ENCODE measurements at regions of chr3 and their contacts with region 1.

Region 1: DNA sequence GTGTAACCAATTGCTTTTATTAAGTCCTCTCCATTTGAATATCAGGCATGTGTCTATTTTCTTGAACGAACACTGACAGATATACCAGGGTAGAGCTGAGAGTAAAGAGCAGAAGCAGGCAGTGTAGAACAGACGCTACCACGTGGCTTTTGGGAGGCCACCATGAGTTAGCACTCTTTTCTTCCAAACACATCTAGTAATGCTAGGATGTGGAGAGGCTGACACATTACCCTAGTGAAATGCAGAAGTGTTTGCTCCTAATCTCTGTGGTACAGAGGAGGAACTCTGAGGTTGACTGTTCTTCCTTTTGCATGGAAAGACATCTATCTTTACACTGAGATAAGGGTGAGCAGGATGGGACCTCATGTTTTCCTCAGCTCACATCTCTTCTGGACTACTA is 216.3 kb downstream of the SATB1 start:
- DNase-seq: no peak
- ATAC-seq: no peak
- H3K4me3 Mint-ChIP-seq: no peak overlapping the region
- H3K27ac Mint-ChIP-seq: no peak overlapping the region
- H3K4me1 Mint-ChIP-seq: peaks cover 5% of the 10 kb centered on the region
- H3K27me3 Mint-ChIP-seq: no peaks in the 10 kb centered on the region
- CTCF ChIP-seq: no peak

Region 2: DNA sequence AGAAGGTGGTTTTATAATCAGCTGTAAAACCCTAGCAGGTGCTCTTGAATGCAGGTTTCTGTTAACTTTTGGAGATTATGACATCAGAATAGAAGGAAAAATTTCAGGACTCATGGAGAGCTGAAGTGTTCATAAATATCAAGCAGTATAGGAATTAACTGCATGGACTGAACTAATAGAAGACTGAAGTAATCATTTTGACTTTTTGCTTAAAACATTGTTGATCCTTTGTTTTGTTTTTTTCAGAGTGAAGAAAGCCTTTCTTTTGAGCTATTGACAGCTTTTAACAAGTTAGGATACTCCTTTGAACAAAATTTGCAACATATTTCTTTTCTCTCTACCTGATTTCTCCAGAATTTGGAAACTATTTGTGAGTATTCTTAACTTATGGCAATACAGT is 1533.1 kb before region 1 on chr3:
- CTCF ChIA-PET with region 1: no interaction called
- POLR2A ChIA-PET with region 1: no interaction called
- intact Hi-C with region 1: no loop called
- DNase-seq: no peak
- ATAC-seq: no peak
- H3K4me3 Mint-ChIP-seq: no peak overlapping the region
- H3K27ac Mint-ChIP-seq: no peak overlapping the region
- H3K4me1 Mint-ChIP-seq: no peaks in the 10 kb centered on the region
- H3K27me3 Mint-ChIP-seq: no peaks in the 10 kb centered on the region
- CTCF ChIP-seq: no peak

Region 3: DNA sequence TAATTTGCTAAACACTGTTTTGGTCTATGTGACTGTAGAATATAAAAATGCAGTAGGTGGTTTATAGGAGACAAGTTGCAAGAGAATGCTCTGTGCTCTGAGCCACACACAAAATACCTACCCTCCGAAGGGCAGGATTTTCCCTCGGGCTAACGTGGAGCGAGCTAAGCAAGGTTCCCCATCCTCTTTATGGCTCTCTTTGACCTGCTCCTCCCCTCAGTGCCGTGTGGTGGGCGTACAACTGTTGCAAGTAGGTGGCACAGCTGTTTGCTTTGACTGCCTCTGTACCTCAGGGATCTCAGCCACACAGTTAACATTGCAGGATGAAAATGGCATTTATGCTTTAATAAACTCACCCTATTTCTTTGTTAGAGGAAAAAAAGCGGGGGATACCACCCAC is 122.8 kb before region 1 on chr3:
- CTCF ChIA-PET with region 1: no interaction called
- POLR2A ChIA-PET with region 1: interaction called, 12 read pairs
- intact Hi-C with region 1: no loop called
- DNase-seq: no peak
- ATAC-seq: no peak
- H3K4me3 Mint-ChIP-seq: no peak overlapping the region
- H3K27ac Mint-ChIP-seq: no peak overlapping the region
- H3K4me1 Mint-ChIP-seq: no peaks in the 10 kb centered on the region
- H3K27me3 Mint-ChIP-seq: peaks cover 10% of the 10 kb centered on the region
- CTCF ChIP-seq: no peak

Region 4: GRCh38 chr3:18195836-18196235 is 13.0 kb before region 1 on chr3:
- CTCF ChIA-PET with region 1: no interaction called
- POLR2A ChIA-PET with region 1: no interaction called
- intact Hi-C with region 1: loop called (anchors 2 kb)
- DNase-seq: no peak
- ATAC-seq: no peak
- H3K4me3 Mint-ChIP-seq: no peak overlapping the region
- H3K27ac Mint-ChIP-seq: no peak overlapping the region
- H3K4me1 Mint-ChIP-seq: peaks cover 1% of the 10 kb centered on the region
- H3K27me3 Mint-ChIP-seq: no peaks in the 10 kb centered on the region
- CTCF ChIP-seq: no peak

Region 5: GRCh38 chr3:18264361-18264760 is 55.5 kb after region 1 on chr3:
- CTCF ChIA-PET with region 1: no interaction called
- POLR2A ChIA-PET with region 1: interaction called, 10 read pairs
- intact Hi-C with region 1: no loop called
- DNase-seq: no peak
- ATAC-seq: no peak
- H3K4me3 Mint-ChIP-seq: no peak overlapping the region
- H3K27ac Mint-ChIP-seq: no peak overlapping the region
- H3K4me1 Mint-ChIP-seq: no peaks in the 10 kb centered on the region
- H3K27me3 Mint-ChIP-seq: peaks cover 2% of the 10 kb centered on the region
- CTCF ChIP-seq: no peak